Activated CD4-positive, alpha-beta T cell treated with anti-CD3 and anti-CD28 coated beads for 36 hours (primary cell): ENCODE measurements at regions of chrX and their contacts with region 1.

Region 1: GRCh38 chrX:130079824-130080406 is 30.4 kb downstream of the ELF4 start:
- DNase-seq: peak; percentile 72
- ATAC-seq: no peak
- H3K4me3 Mint-ChIP-seq: no peak overlapping the region
- H3K27ac Mint-ChIP-seq: peak overlapping the region; percentile 26
- H3K4me1 Mint-ChIP-seq: peaks cover 45% of the 10 kb centered on the region
- H3K27me3 Mint-ChIP-seq: no peaks in the 10 kb centered on the region

Region 2: DNA sequence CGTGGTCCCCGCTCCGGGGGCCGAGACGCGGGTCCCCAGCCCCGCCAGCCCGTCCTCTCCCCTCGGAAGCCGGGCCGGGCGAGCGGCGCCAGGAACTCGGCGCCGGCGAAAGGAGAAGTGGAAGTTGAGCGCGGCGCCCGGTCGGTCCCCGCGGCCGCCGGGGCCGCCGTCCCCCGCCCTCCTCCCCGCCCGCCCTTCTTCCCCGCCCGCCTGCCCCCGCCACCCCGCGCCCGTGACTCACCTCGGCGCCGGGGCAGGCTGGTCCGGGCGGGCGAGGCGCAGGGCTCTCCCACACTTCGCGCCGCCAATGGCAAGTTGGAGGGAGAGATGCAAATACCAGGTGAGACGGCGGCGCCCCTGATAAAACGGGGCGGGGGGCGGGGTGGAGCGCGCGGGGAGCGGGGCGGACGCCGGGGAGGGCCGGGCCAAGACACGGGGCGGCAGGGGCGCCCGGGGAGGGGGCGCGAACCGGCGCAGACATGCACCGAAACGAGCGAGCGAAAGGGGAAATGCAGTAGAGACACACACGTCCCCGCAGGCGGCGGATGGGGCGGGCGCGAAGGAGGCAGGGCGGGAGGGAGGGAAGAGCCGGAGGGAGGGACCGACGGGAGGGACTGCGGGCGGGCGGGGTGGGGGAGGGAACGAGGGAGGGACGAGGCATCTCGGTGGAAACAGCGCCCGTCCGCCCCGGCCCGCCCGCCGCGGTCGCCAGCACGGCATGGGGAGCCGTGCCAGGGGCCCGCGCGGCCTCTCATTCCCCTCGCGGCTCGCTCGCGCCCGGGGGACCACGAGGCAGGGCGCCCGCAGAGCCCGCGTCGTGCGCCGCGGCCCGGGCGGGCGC is 30.7 kb after region 1 on chrX and contains the start of gene ELF4:
- CTCF ChIA-PET with region 1: interaction called, 4 read pairs
- POLR2A ChIA-PET with region 1: interaction called, 4 read pairs
- intact Hi-C with region 1: loop called in 1 of 2 experiments (anchors 1 kb)
- DNase-seq: peak; percentile 77
- ATAC-seq: peak; percentile 68
- H3K4me3 Mint-ChIP-seq: peak within 1 kb of the TSS; percentile 92
- H3K27ac Mint-ChIP-seq: peak within 1 kb of the TSS; percentile 91
- H3K4me1 Mint-ChIP-seq: peaks cover 46% of the 10 kb centered on the region
- H3K27me3 Mint-ChIP-seq: no peaks in the 10 kb centered on the region
- total RNA-seq, gene ELF4: 23.9 to 27.5 TPM

Region 3: DNA sequence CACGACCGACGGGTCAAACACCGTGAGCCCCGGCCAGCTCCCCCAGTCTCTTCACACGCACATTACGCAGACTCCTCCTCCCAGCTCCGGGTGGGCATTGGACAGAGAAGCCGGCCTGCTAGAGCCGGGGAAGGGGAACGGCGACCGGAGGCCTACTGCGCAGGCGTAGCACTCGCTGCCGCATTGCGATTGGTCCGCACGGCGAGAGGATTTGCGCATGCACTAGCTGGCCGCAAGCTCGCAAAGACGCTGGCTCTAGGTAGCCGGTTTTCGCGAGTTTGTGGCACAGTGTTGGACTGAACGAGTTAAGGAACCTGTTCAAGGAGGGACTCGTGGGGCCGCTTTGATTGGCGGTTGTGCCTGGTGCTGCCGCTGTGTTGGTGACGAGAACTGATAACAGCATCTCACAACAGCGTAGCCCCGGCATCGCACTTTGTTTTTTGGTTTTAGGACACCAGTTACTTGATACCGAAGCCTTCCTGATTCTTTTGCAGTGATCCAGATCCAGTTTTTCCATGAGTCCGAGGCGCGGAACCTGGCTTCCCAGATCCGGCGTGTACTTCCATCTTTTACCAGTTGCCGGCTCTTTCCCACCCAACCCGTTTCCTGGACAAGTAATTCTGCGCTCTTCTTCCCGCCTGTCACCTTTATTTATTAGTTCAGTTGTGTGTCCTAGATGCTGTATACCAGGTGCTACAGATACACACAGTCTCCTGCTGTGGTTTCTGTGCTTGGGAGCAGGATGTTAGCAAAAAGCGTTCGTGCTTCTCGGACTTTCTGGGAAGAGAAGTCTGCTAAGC is 86.0 kb after region 1 on chrX and contains the start of gene AIFM1:
- CTCF ChIA-PET with region 1: interaction called, 5 read pairs
- POLR2A ChIA-PET with region 1: interaction called, 4 read pairs
- intact Hi-C with region 1: loop called in 1 of 2 experiments (anchors 5 kb)
- DNase-seq: peak; percentile 92
- ATAC-seq: peak; percentile 95
- H3K4me3 Mint-ChIP-seq: peak within 1 kb of the TSS; percentile 86
- H3K27ac Mint-ChIP-seq: peak within 1 kb of the TSS; percentile 89
- H3K4me1 Mint-ChIP-seq: peaks cover 37% of the 10 kb centered on the region
- H3K27me3 Mint-ChIP-seq: no peaks in the 10 kb centered on the region
- total RNA-seq, gene AIFM1: 48.8 to 61.7 TPM

Region 4: DNA sequence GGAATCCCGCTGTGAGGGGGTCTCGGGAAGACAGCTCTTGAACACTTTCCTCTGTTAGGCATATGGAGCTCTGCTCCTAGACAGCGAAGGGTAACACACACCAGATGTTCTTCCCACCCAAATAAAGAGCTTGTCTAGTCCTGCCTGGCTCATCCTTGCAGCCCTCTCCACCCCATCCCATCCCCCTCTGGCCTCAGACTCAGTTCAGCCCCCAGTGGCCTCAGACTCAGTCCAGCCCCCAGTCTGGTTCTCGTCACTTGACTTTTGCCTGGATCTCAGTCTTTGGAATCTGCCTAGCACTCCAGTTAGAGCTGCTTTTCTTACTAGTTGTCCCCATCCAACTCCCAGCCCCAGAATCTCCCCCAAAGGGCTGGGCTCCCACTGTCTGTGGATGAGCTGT is 106.7 kb after region 1 on chrX:
- CTCF ChIA-PET with region 1: interaction called, 12 read pairs
- POLR2A ChIA-PET with region 1: no interaction called
- intact Hi-C with region 1: no loop called
- DNase-seq: no peak
- ATAC-seq: no peak
- H3K4me3 Mint-ChIP-seq: no peak overlapping the region
- H3K27ac Mint-ChIP-seq: no peak overlapping the region
- H3K4me1 Mint-ChIP-seq: peaks cover 11% of the 10 kb centered on the region
- H3K27me3 Mint-ChIP-seq: no peaks in the 10 kb centered on the region

Region 5: GRCh38 chrX:130339408-130340222 is 259.7 kb after region 1 on chrX and contains the start of gene SLC25A14:
- CTCF ChIA-PET with region 1: no interaction called
- POLR2A ChIA-PET with region 1: no interaction called
- intact Hi-C with region 1: loop called in 1 of 2 experiments (anchors 10 kb)
- DNase-seq: peak; percentile 82
- ATAC-seq: peak; percentile 88
- H3K4me3 Mint-ChIP-seq: peak within 1 kb of the TSS; percentile 87
- H3K27ac Mint-ChIP-seq: peak within 1 kb of the TSS; percentile 94
- H3K4me1 Mint-ChIP-seq: peaks cover 14% of the 10 kb centered on the region
- H3K27me3 Mint-ChIP-seq: no peaks in the 10 kb centered on the region
- total RNA-seq, gene SLC25A14: 9.6 to 11.0 TPM